ENCODE measurements at regions of chr9 and their contacts with region 1.

Region 1: DNA sequence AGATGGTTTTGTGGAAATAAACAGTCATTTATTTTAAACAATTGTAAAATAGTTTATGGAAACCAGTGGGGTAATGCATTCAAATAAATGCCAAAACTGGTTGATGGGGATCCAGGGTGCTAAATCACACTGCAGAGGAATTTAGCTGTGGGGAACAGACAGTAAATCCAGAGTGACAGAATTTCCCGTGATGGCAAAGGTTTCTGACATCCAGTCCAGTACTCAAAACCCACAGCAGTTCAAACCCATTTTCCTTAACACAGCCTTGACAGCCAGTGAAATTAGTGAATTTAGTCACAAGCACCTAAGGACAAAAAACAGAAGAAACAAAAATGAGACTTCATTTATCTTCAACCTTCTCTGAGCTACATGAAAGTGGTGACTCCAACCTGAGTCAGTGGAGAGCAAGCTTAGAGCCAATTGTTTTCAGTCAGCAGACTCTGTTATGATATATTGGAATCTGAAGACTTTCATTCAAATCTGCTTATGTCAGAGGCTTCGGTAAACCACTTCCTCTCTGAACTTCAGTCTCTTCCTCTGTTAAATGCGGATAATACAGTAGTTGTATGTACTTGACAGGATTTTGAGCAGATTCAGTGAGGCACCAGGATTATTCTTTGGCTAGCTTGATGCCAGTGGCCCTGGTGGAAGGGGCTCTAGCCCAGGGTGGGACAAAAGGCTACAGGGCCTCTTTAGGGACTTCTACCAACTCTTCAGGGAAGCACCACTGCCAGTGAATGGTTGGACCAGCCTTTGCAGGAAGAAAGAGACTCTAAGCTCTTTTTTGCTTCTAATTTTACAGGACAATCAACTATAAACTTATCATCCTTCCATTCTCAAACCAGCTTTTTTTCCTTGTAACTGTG is 185.3 kb downstream of the MAPKAP1 start:
- DNase-seq: peak; percentile 84
- H3K4me3 Mint-ChIP-seq: peak overlapping the region; percentile 78
- H3K27ac Mint-ChIP-seq: peak overlapping the region; percentile 95
- H3K4me1 Mint-ChIP-seq: peaks cover 41% of the 10 kb centered on the region
- H3K27me3 Mint-ChIP-seq: no peaks in the 10 kb centered on the region

Region 2: DNA sequence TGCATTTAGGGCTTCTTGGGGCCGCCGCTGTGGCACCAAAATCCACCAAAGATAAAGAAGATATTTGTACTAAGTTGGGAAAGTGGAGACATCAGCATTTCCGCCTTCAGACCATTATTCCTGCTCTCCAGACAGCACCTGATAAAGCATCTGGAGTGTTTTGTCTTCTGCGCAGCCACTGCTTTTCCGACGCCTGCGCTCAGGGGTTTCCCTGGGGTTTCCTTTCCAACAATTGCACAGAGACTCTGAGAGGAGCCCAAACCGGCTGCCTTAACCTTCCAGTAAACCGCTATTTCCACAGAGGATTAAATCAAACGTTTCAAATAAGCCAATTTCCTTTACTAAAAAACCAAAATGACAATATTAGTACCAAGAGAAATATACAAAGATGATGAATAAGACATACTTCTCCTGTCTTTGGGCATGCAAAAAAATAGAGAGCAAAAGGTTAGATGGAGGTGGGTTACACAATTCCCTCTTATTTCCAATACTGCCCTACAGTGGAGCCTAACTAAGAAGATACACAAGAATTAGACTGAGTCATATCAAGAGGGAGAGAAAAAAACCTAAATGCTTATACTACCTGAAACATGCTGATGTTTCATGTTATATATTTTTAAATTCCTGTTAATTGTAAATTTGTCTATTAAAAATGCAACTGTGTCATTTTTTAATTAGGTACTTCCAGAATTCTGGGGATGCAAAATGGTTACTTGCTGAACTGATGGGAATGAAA is 87.0 kb after region 1 on chr9:
- intact Hi-C with region 1: loop called (anchors 5 kb)
- DNase-seq: no peak
- H3K4me3 Mint-ChIP-seq: peak overlapping the region; percentile 39
- H3K27ac Mint-ChIP-seq: peak overlapping the region; percentile 54
- H3K4me1 Mint-ChIP-seq: peaks cover 25% of the 10 kb centered on the region
- H3K27me3 Mint-ChIP-seq: no peaks in the 10 kb centered on the region

Region 3: DNA sequence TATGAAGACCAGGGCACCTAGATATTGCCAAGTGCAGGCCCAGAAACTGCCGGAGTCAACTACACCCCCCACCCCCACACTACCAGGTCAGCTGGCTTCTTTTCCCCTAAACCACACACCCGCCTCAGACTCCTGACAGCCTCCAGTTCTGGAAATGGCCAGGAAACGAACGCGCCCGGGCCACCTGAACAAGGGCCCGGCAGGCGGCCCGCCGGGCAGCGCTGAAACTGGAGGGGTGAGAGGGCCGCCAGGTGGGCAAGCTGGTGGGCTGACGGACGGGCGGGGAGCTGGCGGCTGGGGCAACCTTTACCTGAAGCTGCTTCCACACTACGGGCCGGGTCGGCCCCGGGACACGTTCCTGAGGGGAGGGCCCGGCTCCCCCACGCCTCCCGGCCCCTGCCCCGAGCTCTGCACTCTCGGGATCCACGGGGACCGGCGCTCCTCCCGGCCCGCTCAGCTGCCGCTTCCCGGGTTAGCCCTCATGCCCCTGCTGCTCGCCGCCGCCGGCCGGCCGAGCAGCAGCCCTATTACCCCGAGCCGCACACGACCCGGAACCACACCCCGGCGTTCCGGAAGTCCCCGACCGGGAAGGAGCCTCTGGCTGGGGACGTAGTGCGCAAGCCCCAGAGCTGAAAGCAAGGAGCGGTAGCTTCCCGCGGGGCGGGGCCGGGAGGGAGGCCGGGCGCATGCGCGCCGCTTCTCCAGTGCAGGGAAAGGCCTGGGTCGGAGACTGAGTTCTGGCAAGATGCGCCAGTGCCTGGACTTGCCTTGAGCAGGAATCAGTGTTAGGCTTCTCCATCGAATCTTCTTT is 185.2 kb after region 1 on chr9 and contains the start of gene MAPKAP1:
- intact Hi-C with region 1: loop called (anchors 5 kb)
- DNase-seq: peak; percentile 98
- H3K4me3 Mint-ChIP-seq: peak within 1 kb of the TSS; percentile 89
- H3K27ac Mint-ChIP-seq: peak within 1 kb of the TSS; percentile 83
- H3K4me1 Mint-ChIP-seq: peaks cover 35% of the 10 kb centered on the region
- H3K27me3 Mint-ChIP-seq: peaks cover 2% of the 10 kb centered on the region
- total RNA-seq, gene MAPKAP1: 104 and 123 TPM in 2 replicates

Region 4: DNA sequence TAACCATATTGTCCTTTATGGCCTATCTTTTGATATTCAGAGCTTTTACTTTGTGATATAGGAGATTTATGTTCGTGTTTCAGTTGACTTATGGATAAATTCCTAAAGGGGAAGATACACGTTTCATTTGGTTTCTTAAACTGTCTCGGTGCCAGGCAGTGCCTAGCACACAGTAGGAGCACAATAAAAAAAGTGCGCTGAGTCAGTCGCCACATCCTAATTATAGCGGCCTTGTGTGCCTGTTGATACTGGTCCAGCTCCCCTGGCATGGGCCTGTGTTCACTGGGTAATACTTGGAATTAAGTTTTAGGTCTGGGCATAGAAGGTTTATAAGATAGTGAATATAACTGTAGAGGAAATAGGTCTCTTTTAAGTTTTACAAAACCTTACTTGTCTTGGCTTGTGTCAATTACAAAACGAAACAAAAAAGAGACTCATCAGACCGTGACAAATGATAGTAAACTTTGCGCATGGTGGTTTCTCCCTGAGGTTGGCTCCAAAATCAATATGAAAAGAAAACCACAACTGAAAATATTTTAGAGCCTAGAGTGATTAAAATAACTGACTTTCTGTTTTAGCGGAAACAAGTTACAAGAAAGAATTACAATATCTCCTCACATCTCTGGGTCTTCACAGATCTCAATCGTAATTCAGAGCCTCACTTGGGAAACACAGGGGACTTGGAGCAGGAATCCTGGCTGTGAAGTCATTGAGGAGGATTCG is 889.7 kb after region 1 on chr9:
- intact Hi-C with region 1: loop called (anchors 5 kb)
- DNase-seq: peak; percentile 86
- H3K4me3 Mint-ChIP-seq: peak overlapping the region; percentile 47
- H3K27ac Mint-ChIP-seq: peak overlapping the region; percentile 45
- H3K4me1 Mint-ChIP-seq: peaks cover 39% of the 10 kb centered on the region
- H3K27me3 Mint-ChIP-seq: peaks cover 5% of the 10 kb centered on the region

Region 5: GRCh38 chr9:126514047-126514821 is 992.5 kb after region 1 on chr9:
- intact Hi-C with region 1: loop called (anchors 10 kb)
- DNase-seq: peak; percentile 90
- H3K4me3 Mint-ChIP-seq: no peak overlapping the region
- H3K27ac Mint-ChIP-seq: no peak overlapping the region
- H3K4me1 Mint-ChIP-seq: peaks cover 22% of the 10 kb centered on the region
- H3K27me3 Mint-ChIP-seq: peaks cover 66% of the 10 kb centered on the region

Measured in activated CD4-positive, alpha-beta T cell treated with anti-CD3 and anti-CD28 coated beads, Interleukin-2, amount 10 ng/mL, durations not matched to agents 24 days and 14 days (primary cell).